ENCODE measurements at regions of chr6 and their contacts with region 1.

Region 1: GRCh38 chr6:119349323-119350042 is at the start of gene MAN1A1:
- DNase-seq: peak; percentile 92
- H3K4me3 Mint-ChIP-seq: peak within 1 kb of the TSS; percentile 79
- H3K27ac Mint-ChIP-seq: peak within 1 kb of the TSS; percentile 94
- H3K4me1 Mint-ChIP-seq: peaks cover 69% of the 10 kb centered on the region
- H3K27me3 Mint-ChIP-seq: no peaks in the 10 kb centered on the region
- total RNA-seq, gene MAN1A1: 50.1 and 52.4 TPM in 2 replicates

Region 2: DNA sequence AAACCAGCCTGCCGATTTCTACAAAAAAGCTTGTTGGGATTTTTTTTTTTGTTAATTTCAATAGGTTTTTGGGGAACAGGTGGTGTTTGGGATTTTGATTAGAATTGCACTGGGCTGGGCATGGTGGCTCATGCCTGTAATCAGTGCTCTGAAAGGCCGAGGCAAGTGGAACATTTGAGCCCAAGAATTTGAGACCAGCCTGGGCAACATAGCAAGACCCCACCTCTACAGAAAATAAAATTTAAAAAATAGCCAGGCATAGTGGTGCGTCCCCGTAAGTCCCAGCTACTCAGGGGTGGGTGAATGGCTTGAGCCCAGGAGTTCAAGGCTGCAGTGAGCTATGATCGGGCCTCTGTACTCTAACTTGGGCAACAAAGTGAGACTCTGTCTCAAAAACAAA is 496.1 kb before region 1 on chr6:
- intact Hi-C with region 1: no loop called
- DNase-seq: no peak
- H3K4me3 Mint-ChIP-seq: no peak overlapping the region
- H3K27ac Mint-ChIP-seq: no peak overlapping the region
- H3K4me1 Mint-ChIP-seq: no peaks in the 10 kb centered on the region
- H3K27me3 Mint-ChIP-seq: no peaks in the 10 kb centered on the region

Region 3: DNA sequence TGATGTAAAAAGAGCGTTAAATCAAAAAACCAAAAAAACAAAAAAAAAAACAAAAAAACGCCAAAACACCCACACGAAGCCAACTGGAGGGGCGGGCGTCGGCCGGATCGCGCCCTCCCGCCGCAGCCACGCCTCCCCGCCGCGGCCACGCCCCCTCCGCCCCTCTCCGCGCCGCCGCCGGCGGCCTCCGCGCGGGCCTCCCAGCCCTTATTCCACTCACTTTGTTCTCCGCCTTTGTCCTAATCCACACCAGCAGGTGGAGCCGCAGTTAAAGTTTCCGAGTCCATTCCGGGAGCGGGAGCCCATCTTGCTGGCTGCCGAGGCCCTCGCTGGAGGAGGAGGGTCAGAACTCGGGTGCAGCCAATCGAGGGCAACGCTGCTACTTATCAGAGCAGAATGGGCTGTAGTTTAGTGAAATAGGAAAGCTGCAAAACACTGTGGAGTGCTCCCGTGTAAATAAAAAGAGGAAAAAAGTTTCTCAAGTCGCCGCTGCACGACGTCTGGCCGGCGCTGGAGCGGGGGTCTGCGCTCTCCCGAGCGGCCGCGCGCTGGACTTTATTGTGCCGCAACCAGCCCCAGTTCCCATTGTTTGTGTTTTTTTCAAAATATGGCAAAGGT is 455.6 kb before region 1 on chr6 and contains the start of gene ASF1A:
- intact Hi-C with region 1: loop called (anchors 1 kb)
- DNase-seq: peak; percentile 95
- H3K4me3 Mint-ChIP-seq: peak within 1 kb of the TSS; percentile 94
- H3K27ac Mint-ChIP-seq: peak within 1 kb of the TSS; percentile 96
- H3K4me1 Mint-ChIP-seq: peaks cover 49% of the 10 kb centered on the region
- H3K27me3 Mint-ChIP-seq: no peaks in the 10 kb centered on the region
- total RNA-seq, gene ASF1A: 36.0 and 42.9 TPM in 2 replicates

Region 4: GRCh38 chr6:119147101-119148053 is 202.1 kb before region 1 on chr6:
- intact Hi-C with region 1: loop called (anchors 1 kb)
- DNase-seq: peak; percentile 27
- H3K4me3 Mint-ChIP-seq: no peak overlapping the region
- H3K27ac Mint-ChIP-seq: peak overlapping the region; percentile 77
- H3K4me1 Mint-ChIP-seq: peaks cover 62% of the 10 kb centered on the region
- H3K27me3 Mint-ChIP-seq: no peaks in the 10 kb centered on the region

Region 5: DNA sequence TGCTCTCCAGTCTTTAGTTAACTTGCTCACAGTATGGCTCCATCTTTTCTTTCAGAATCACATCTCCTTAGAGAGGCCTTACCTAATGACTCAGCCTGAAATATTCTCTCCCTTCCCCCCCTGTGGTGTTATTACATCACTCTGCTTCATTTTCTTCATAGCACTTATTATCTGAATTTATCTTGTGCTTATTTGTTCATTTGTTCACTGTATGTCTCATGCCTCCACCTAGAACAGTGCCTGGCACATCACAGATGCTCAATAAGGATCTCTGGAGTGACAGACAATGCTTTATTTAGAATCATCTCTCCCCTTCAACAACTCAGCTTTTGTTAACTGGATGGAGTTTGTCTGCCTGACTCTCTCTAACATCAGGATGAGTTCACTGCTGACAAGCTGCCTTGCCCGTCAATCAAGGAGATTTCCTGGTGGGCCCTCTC is 96.7 kb after region 1 on chr6:
- intact Hi-C with region 1: loop called (anchors 2 kb)
- DNase-seq: no peak
- H3K4me3 Mint-ChIP-seq: no peak overlapping the region
- H3K27ac Mint-ChIP-seq: peak overlapping the region; percentile 6
- H3K4me1 Mint-ChIP-seq: peaks cover 55% of the 10 kb centered on the region
- H3K27me3 Mint-ChIP-seq: peaks cover 6% of the 10 kb centered on the region

Region 6: GRCh38 chr6:119742188-119742803 is 392.8 kb after region 1 on chr6:
- intact Hi-C with region 1: loop called (anchors 2 kb)
- DNase-seq: peak; percentile 16
- H3K4me3 Mint-ChIP-seq: no peak overlapping the region
- H3K27ac Mint-ChIP-seq: no peak overlapping the region
- H3K4me1 Mint-ChIP-seq: no peaks in the 10 kb centered on the region
- H3K27me3 Mint-ChIP-seq: peaks cover 10% of the 10 kb centered on the region

Measured in activated T-helper 1 cell treated with anti-CD3 and anti-CD28 coated beads, Interleukin-12 subunit alpha, Interleukin-12 subunit beta, Interleukin-2, Interleukin-4 antibody, amounts not matched to agents 30 ng/mL and 10 ng/mL and 1 ng/mL, durations not matched to agents 14 hours and 24 hours and 36 hours (primary cell).